ENCODE measurements at regions of chr14 and their contacts with region 1.

Region 1: GRCh38 chr14:34920339-34920738 is 45.2 kb upstream of the BAZ1A start:
- DNase-seq: no peak
- H3K4me3 ChIP-seq: no peak overlapping the region
- H3K27ac ChIP-seq: no peak overlapping the region
- H3K4me1 ChIP-seq: no peaks in the 10 kb centered on the region
- H3K27me3 ChIP-seq: no peaks in the 10 kb centered on the region
- CTCF ChIP-seq: no peak

Region 2: DNA sequence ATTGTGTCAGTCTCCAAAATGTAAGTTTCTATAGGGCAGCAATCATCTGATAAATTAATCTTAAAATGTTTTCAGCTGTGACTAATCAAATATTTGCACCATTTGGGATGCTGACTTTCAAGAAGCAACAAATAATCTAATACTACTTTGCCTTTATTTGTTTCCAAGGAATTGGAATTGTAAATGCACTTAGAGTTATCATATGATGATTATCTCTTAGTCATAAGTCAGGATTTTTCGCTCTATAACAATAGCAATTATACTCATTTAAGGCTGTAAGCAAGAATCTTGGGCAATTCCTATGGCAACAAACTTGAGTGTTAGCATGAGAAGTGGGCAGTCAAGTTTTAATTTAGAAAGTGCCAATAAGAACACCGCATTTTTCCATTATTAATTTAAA is 32.2 kb before region 1 on chr14:
- CTCF ChIA-PET with region 1: no interaction called
- POLR2A ChIA-PET with region 1: no interaction called
- intact Hi-C with region 1: loop called (anchors 2 kb)
- DNase-seq: no peak
- H3K4me3 ChIP-seq: no peak overlapping the region
- H3K27ac ChIP-seq: no peak overlapping the region
- H3K4me1 ChIP-seq: no peaks in the 10 kb centered on the region
- H3K27me3 ChIP-seq: no peaks in the 10 kb centered on the region
- CTCF ChIP-seq: no peak

Region 3: GRCh38 chr14:35446450-35446849 is 526.1 kb after region 1 on chr14:
- CTCF ChIA-PET with region 1: no interaction called
- POLR2A ChIA-PET with region 1: no interaction called
- intact Hi-C with region 1: no loop called
- DNase-seq: no peak
- H3K4me3 ChIP-seq: no peak overlapping the region
- H3K27ac ChIP-seq: no peak overlapping the region
- H3K4me1 ChIP-seq: no peaks in the 10 kb centered on the region
- H3K27me3 ChIP-seq: no peaks in the 10 kb centered on the region
- CTCF ChIP-seq: no peak

Measured in PC-9 (cell line).